ENCODE measurements at regions of chr4 and their contacts with region 1.

Region 1: GRCh38 chr4:186587416-186588018 is 32.1 kb upstream of the MTNR1A start:
- DNase-seq: peak in 1 of 2 donors; percentile 19
- ATAC-seq: no peak
- H3K4me3 ChIP-seq: no peak overlapping the region
- H3K27ac ChIP-seq: no peak overlapping the region
- H3K4me1 ChIP-seq: no peaks in the 10 kb centered on the region
- H3K27me3 ChIP-seq: no peaks in the 10 kb centered on the region
- CTCF ChIP-seq: peak; percentile 45 to 84 (median 53)
- POLR2A ChIP-seq: no peak

Region 2: GRCh38 chr4:186297013-186297645 is 290.4 kb before region 1 on chr4:
- in situ Hi-C with region 1: loop called (anchors 5 to 25 kb)
- intact Hi-C with region 1: loop called (anchors 2 kb)
- DNase-seq: no peak
- ATAC-seq: no peak
- H3K4me3 ChIP-seq: no peak overlapping the region
- H3K27ac ChIP-seq: no peak overlapping the region
- H3K4me1 ChIP-seq: no peaks in the 10 kb centered on the region
- H3K27me3 ChIP-seq: peaks cover 9 to 12% (median 12%) of the 10 kb centered on the region in 3 donors
- CTCF ChIP-seq: peak in 2 of 5 experiments; percentile 53
- POLR2A ChIP-seq: no peak

Region 3: DNA sequence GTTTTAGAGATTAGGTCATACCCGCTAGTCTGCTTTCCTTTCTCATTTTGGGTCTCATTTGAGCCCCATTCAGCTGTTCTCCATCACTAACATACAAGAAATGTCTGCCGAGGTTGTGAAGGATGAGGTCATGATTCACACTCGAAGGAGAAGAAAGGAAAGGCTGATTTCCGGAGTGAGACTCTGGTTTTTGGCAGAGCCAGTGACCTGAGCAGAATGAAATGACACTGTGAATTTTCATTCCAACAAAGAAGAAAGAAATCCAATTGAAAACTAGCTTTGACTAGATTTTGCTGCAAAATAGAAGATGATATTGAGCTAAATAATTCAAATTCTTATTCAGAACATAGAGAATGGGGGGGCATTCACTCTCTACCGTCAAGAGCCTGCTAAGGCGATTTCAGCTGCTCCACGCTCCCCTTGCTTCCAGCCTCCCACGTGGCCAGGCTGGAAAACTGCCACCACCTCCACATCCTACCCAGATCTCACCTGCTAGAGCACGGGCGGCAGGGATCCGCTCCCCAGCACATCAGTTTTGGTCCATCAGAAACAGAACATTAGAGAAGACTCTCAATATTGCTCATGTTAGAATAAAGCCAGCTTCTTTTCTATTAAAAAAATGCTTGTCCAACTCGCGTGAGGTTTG is 282.5 kb before region 1 on chr4:
- in situ Hi-C with region 1: loop called in 1 of 4 experiments (anchors 5 kb)
- intact Hi-C with region 1: no loop called
- DNase-seq: no peak
- ATAC-seq: no peak
- H3K4me3 ChIP-seq: no peak overlapping the region
- H3K27ac ChIP-seq: no peak overlapping the region
- H3K4me1 ChIP-seq: no peaks in the 10 kb centered on the region
- H3K27me3 ChIP-seq: peaks cover 3 to 8% (median 7%) of the 10 kb centered on the region in 3 donors
- CTCF ChIP-seq: no peak
- POLR2A ChIP-seq: no peak

Region 4: DNA sequence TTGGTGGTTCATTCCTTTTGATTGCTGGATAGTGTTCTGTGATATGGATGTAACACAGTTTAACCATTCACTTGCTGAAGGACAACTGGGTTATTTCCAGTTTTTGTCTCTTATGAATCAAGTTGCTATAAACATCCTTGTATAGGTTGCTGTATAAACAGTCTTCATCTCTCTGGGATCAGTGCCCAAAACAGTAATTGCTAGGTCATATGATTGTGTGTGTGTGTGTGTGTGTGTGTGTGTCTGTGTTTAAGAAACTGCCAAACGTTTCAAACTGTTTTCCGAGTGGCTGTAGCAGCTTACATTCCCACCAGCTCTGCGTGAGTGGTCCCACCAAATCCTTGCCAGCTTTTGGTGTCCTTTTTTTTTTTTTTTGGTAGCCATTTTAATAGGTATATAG is 261.1 kb before region 1 on chr4:
- in situ Hi-C with region 1: no loop called
- intact Hi-C with region 1: no loop called
- DNase-seq: no peak
- ATAC-seq: no peak
- H3K4me3 ChIP-seq: no peak overlapping the region
- H3K27ac ChIP-seq: no peak overlapping the region
- H3K4me1 ChIP-seq: no peaks in the 10 kb centered on the region
- H3K27me3 ChIP-seq: no peaks in the 10 kb centered on the region
- CTCF ChIP-seq: no peak
- POLR2A ChIP-seq: no peak

Region 5: DNA sequence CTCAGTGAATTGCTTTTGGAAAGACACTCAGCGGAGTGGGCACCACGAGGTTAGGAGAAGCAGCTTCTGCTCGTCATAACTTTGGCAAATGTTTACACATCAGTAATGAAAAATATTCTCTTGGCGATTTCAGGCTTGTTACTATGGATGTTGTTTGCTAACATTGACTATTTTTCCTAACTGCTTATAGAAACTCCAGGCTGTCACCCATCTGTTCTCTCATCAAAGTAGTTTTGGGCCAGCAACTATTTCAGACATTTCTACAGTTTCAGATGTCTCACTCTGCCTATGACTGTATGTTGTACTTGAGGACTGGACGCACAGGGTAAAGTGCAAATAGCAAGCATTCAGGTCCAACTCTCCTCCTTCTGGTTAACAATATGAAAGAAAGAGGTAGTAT is 1898.4 kb after region 1 on chr4:
- in situ Hi-C with region 1: no loop called
- intact Hi-C with region 1: no loop called
- DNase-seq: no peak
- ATAC-seq: no peak
- H3K4me3 ChIP-seq: no peak overlapping the region
- H3K27ac ChIP-seq: no peak overlapping the region
- H3K4me1 ChIP-seq: no peaks in the 10 kb centered on the region
- H3K27me3 ChIP-seq: no peaks in the 10 kb centered on the region
- CTCF ChIP-seq: no peak
- POLR2A ChIP-seq: no peak